ENCODE measurements at regions of chr1 and their contacts with region 1.

Region 1: DNA sequence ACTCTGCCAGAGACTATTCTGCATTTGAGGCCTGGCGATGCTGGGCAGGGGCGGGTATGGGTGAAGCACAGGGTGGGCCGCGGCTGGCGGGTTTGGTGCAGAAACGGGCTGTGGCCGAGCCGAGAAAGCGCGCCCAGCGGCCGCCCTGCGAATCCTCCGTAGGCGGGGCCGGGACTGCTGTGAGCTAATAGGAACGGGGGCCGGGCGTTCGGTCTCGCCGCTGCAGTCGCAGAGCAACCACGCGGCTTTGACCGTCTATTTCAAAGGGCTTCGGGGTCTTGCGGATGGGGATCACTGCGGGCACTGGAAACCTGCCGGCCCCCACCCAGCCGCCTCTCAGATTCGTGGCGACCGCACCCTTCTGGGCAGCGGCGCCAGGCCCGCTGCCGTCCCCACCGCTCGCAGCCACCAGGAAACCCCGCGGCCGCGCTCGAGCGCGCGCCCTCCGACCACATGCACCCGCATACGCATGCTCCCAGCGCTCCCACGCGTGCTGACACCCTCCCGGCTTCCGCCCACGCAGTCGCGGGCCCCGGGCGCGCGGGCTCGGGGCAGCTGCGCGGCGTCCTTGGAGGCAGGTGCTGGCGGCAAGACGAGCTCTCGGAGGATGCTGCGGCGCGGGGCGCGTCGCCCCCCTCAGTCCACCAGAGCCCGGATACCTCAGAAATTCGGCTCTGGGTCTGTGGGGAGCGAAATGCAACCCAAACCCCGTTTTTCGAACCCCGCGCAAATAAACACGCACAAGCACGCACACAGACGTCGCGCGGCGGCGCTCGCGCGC is 32.6 kb downstream of the DNTTIP2 start:
- H3K4me3 ChIP-seq: peak overlapping the region; percentile 88
- H3K27ac ChIP-seq: peak overlapping the region; percentile 91
- H3K4me1 ChIP-seq: peaks cover 3% of the 10 kb centered on the region; the same call in 1 of the 2 replicates
- CTCF ChIP-seq: peak; percentile 67

Region 2: GRCh38 chr1:93635614-93636543 is 210.5 kb before region 1 on chr1:
- CTCF ChIA-PET with region 1: interaction called, 61 read pairs
- POLR2A ChIA-PET with region 1: no interaction called
- H3K4me3 ChIP-seq: no peak overlapping the region
- H3K27ac ChIP-seq: no peak overlapping the region
- H3K4me1 ChIP-seq: no peaks in the 10 kb centered on the region
- CTCF ChIP-seq: no peak

Region 3: DNA sequence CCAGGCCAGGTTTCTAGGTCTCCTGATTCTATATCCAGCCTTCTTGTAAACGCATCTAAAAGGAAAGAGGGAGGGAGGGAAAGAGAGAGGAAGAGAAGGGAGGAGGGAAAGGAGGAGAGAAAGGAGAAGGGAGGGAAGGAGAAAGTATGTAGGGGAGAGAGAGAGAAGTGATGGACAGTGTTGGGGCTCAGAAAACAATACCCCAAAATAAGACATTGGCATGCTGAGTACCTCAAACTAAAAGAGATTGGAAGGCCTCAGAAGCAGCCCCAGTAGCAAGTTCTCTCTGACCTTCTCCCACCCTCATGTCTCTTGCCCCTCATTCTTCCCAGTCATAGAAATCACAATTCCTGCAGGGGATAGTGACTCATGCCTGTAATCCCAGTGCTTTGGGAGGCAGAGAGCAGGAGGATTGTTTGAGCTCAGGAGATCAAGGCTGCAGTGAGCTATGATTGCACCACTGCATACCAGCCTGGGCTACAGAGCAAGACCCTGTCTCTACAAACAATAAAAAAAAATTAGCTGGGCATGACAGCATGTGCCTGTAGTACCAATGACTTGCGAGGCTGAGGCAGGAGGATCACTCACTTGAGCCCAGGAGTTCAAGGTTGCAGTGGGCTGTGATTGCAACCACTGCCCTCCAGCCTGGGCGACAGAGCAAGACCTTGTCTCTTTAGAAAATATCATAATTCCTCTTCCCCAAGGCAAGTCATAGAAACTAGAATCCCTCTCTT is 18.6 kb before region 1 on chr1:
- CTCF ChIA-PET with region 1: interaction called, 11 read pairs
- POLR2A ChIA-PET with region 1: no interaction called
- H3K4me3 ChIP-seq: no peak overlapping the region
- H3K27ac ChIP-seq: no peak overlapping the region
- H3K4me1 ChIP-seq: no peaks in the 10 kb centered on the region
- CTCF ChIP-seq: no peak

Measured in HEK293 (cell line).